K562 (cell line): ENCODE measurements at regions of chr9 and their contacts with region 1.

Region 1: GRCh38 chr9:14353222-14354056 is 39.5 kb upstream of the NFIB start:
- DNase-seq: peak; percentile 67 to 84 (median 72)
- ATAC-seq: peak; percentile 97
- H3K4me3 ChIP-seq: no peak overlapping the region
- H3K27ac ChIP-seq: no peak overlapping the region
- H3K4me1 ChIP-seq: peaks cover 3 to 4% of the 10 kb centered on the region in 2 experiments; a peak in 3 of 5 replicates
- H3K27me3 ChIP-seq: no peaks in the 10 kb centered on the region
- CTCF ChIP-seq: peak; percentile 75 to 86 (median 77)
- EP300 ChIP-seq: no peak
- POLR2A ChIP-seq: no peak
- RAD21 ChIP-seq: peak; percentile 69 to 85

Region 2: GRCh38 chr9:13962006-13962405 is 391.4 kb before region 1 on chr9:
- CTCF ChIA-PET with region 1: no interaction called
- POLR2A ChIA-PET with region 1: no interaction called
- in situ Hi-C with region 1: loop called (anchors 10 kb)
- intact Hi-C with region 1: no loop called
- DNase-seq: no peak
- ATAC-seq: no peak
- H3K4me3 ChIP-seq: no peak overlapping the region
- H3K27ac ChIP-seq: no peak overlapping the region
- H3K4me1 ChIP-seq: no peaks in the 10 kb centered on the region
- H3K27me3 ChIP-seq: no peaks in the 10 kb centered on the region; a peak in 2 of 5 replicates
- CTCF ChIP-seq: no peak
- EP300 ChIP-seq: no peak
- POLR2A ChIP-seq: no peak
- RAD21 ChIP-seq: no peak

Region 3: DNA sequence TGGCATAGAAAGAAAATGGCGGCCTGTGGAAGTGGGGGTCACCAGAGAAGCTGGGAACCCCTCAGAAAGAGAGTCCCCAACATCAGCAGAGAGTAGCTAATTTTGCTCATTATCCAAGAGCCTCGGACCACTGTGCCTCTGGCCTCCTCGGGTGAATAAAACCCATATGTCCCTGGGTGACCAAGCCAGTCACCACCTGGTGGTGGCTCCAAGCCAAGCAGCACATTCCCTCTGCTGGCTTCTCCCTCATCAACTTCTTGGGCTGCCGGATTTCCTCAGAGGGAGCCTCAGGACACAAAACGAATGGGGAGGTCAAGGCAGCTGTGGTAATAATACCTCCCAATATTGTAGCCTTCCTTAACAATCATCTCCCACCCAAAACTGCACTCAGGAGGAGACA is 282.0 kb before region 1 on chr9:
- CTCF ChIA-PET with region 1: interaction called, 5 read pairs
- POLR2A ChIA-PET with region 1: no interaction called
- in situ Hi-C with region 1: no loop called
- intact Hi-C with region 1: loop called (anchors 2 kb)
- DNase-seq: peak in 2 of 4 experiments; percentile 5 to 7
- ATAC-seq: peak; percentile 36; the same call in 1 of the 3 replicates
- H3K4me3 ChIP-seq: no peak overlapping the region
- H3K27ac ChIP-seq: no peak overlapping the region
- H3K4me1 ChIP-seq: no peaks in the 10 kb centered on the region
- H3K27me3 ChIP-seq: peaks cover 0 to 11% of the 10 kb centered on the region in 2 experiments; a peak in 2 of 5 replicates
- CTCF ChIP-seq: 0 out of 6 replicates have a peak, but pooled peaks of 1 of the 3 experiments have one; percentile 15
- EP300 ChIP-seq: no peak
- POLR2A ChIP-seq: no peak
- RAD21 ChIP-seq: no peak

Region 4: GRCh38 chr9:14366076-14366475 is 12.6 kb after region 1 on chr9:
- CTCF ChIA-PET with region 1: no interaction called
- POLR2A ChIA-PET with region 1: no interaction called
- in situ Hi-C with region 1: no loop called
- intact Hi-C with region 1: no loop called
- DNase-seq: no peak
- ATAC-seq: no peak
- H3K4me3 ChIP-seq: no peak overlapping the region
- H3K27ac ChIP-seq: no peak overlapping the region
- H3K4me1 ChIP-seq: no peaks in the 10 kb centered on the region
- H3K27me3 ChIP-seq: no peaks in the 10 kb centered on the region
- CTCF ChIP-seq: no peak
- EP300 ChIP-seq: no peak
- POLR2A ChIP-seq: no peak
- RAD21 ChIP-seq: no peak

Region 5: DNA sequence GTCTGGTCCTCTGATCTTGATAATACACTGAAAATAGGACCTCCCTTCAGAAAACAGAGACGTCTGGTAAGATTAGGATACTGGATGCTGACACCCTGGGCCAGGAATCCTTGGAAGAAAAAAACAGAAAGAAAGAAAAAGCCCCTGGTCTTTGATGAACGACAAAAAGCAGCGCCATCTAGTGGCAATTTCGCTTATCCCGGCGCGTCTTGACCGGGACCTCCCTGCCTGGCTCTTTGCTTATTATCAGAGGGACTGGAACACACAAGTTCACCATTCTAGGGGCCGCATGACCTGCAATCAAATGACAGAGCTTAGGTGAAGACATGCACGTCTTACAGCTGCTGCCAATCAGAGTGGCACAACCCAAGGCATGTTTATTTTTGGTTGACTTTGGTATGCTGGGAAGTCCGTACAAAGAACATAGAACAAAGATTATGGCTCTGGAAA is 75.4 kb after region 1 on chr9:
- CTCF ChIA-PET with region 1: no interaction called
- POLR2A ChIA-PET with region 1: no interaction called
- in situ Hi-C with region 1: no loop called
- intact Hi-C with region 1: loop called (anchors 2 kb)
- DNase-seq: peak; percentile 50 to 78 (median 58)
- ATAC-seq: peak; percentile 87
- H3K4me3 ChIP-seq: no peak overlapping the region
- H3K27ac ChIP-seq: no peak overlapping the region
- H3K4me1 ChIP-seq: peaks cover 0 to 19% of the 10 kb centered on the region in 2 experiments; a peak in 3 of 5 replicates
- H3K27me3 ChIP-seq: no peaks in the 10 kb centered on the region
- CTCF ChIP-seq: peak; percentile 56 to 76 (median 63)
- EP300 ChIP-seq: no peak
- POLR2A ChIP-seq: no peak
- RAD21 ChIP-seq: peak in 1 of 2 experiments; percentile 45; a peak in 2 of 4 replicates